Aorta (tissue), 5 donors: ENCODE measurements at regions of chr1 and their contacts with region 1.

Region 1: DNA sequence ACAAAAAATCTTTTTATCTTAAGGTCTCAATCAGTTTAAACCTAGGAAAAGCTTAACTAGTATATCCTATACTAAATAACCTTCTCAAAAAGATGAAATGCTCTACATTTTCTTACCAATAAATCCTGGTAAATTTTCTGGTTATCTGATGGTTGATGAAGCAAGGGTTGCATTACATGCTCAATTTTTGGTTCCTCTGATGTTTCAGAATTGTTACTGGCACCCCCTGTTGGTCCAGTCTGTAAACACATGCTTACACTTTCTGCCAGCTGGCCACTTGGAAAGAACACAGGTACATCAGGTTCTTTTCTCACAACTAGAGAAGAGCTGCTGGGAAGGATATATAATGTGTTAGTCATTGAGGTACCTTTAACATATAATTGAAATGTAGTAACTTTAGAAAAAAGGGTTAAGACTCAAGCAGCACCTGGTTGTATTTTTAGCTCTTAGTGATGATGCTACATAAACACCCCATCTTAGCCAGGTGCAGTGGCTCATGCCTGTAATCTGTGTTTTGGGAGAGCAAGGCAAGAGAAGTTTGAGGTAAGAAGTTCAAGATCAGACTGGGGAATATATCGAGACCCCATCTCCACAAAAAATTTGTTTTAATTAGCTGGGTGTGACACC is 30.9 kb upstream of the TAL1 start:
- DNase-seq: no peak
- ATAC-seq: no peak
- H3K4me3 ChIP-seq: no peak overlapping the region
- H3K27ac ChIP-seq: no peak overlapping the region
- H3K4me1 ChIP-seq: no peaks in the 10 kb centered on the region
- H3K27me3 ChIP-seq: no peaks in the 10 kb centered on the region

Region 2: DNA sequence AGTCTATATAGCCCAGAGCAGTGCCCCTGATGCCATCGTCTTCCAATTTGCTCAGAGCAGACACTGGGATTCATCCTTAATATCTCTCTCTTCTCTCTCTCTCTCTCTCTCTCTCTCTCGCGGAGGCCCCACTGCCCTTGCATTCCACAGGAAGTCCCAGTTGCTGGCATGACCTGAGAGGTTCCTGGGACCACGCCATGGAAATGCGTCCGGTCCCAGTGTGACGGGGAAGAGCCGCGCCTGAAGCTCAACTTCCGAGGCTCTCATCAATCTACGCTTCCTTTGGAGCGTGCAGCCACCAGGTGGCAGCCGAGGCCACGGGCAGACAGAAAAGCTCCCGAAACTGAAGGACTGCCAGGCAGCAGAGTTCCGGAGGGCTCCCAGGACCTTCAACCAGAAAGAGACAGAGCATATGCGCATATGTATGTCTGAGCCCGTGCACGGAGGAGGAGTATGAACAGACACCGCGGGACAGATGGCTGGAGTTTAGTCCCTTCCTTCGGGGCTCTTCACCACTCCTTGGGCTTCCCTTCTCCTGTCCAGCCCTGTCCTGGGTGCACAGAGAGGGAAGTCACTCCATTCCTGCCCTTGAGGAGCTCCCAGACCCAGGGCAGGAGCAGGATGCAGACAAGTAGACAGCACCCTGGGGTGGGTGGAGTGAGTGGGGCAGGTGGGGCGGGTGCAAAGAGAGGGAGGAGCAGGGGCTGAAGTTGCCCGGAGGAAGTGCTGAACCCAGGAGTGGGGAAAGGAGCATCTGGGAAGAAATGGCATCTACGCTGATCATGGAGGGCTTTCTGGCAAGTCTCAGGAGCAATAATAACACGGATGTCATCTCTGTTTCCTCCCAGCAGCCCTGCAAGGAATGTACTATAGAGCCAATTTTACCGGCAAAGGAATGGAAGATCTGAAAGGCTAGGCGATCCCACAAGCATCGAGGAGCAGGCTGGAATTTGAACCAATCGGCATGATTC is 83.6 kb before region 1 on chr1:
- intact Hi-C with region 1: loop called in 1 of 2 experiments (anchors 5 kb)
- DNase-seq: peak; percentile 95 to 97
- ATAC-seq: peak; percentile 87
- H3K4me3 ChIP-seq: peak overlapping the region in 1 of 2 donors; percentile 17
- H3K27ac ChIP-seq: no peak overlapping the region
- H3K4me1 ChIP-seq: no peaks in the 10 kb centered on the region
- H3K27me3 ChIP-seq: no peaks in the 10 kb centered on the region